CD8-positive, alpha-beta T cell (primary cell): ENCODE measurements at regions of chr4 and their contacts with region 1.

Region 1: GRCh38 chr4:73080789-73081188 is 11.3 kb upstream of the COX18 start:
- DNase-seq: no peak
- ATAC-seq: no peak
- H3K4me3 ChIP-seq: no peak overlapping the region
- H3K4me3 Mint-ChIP-seq: no peak overlapping the region
- H3K27ac ChIP-seq: no peak overlapping the region
- H3K27ac Mint-ChIP-seq: peak overlapping the region; percentile 41
- H3K4me1 ChIP-seq: no peaks in the 10 kb centered on the region
- H3K4me1 Mint-ChIP-seq: peaks cover 3% of the 10 kb centered on the region
- H3K27me3 ChIP-seq: no peaks in the 10 kb centered on the region
- H3K27me3 Mint-ChIP-seq: no peaks in the 10 kb centered on the region
- CTCF ChIP-seq: no peak

Region 2: DNA sequence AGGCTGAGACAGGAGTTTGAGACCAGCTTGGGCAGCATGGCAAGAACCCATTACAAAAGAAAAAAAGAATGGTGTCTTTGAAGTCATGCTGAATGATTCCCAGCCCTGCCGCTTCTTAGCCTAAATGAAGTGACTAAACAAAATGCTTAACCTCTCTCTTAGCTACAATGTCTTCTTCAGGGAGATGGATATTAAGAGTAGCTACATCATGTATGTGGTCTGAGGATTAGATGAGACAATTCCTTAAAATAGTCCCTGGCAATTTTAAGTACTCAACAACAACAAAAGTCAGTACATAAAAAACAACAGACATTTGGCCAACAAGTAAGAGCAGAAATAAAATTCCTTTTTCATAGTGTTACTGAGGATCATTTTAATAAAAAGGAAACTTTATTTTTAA is 53.0 kb after region 1 on chr4:
- CTCF ChIA-PET with region 1: no interaction called
- POLR2A ChIA-PET with region 1: no interaction called
- intact Hi-C with region 1: loop called in 1 of 2 experiments (anchors 5 kb)
- DNase-seq: no peak
- ATAC-seq: no peak
- H3K4me3 ChIP-seq: no peak overlapping the region
- H3K4me3 Mint-ChIP-seq: no peak overlapping the region
- H3K27ac ChIP-seq: no peak overlapping the region
- H3K27ac Mint-ChIP-seq: peak overlapping the region; percentile 5
- H3K4me1 ChIP-seq: no peaks in the 10 kb centered on the region
- H3K4me1 Mint-ChIP-seq: peaks cover 8% of the 10 kb centered on the region
- H3K27me3 ChIP-seq: no peaks in the 10 kb centered on the region
- H3K27me3 Mint-ChIP-seq: no peaks in the 10 kb centered on the region
- CTCF ChIP-seq: no peak

Region 3: DNA sequence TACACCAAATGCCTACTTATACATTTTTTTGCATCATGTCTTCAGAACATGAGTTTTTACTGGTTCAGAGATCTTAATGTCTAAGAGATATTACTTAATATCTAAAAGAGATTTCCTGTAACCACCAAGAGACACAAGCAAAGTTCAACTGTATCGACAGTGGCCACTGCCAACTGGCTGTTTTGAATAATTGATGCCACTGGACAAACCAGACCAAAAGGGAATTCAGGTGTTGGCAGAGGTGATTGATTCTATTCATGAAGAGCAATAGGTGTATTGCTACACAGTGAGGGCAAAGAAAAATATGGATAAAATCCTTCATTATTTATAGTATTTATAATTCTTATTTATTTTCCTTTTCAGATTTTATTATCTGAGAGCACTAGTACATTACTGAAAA is 236.3 kb after region 1 on chr4:
- CTCF ChIA-PET with region 1: no interaction called
- POLR2A ChIA-PET with region 1: no interaction called
- intact Hi-C with region 1: no loop called
- DNase-seq: no peak
- ATAC-seq: no peak
- H3K4me3 ChIP-seq: no peak overlapping the region
- H3K4me3 Mint-ChIP-seq: no peak overlapping the region
- H3K27ac ChIP-seq: no peak overlapping the region
- H3K27ac Mint-ChIP-seq: no peak overlapping the region
- H3K4me1 ChIP-seq: no peaks in the 10 kb centered on the region
- H3K4me1 Mint-ChIP-seq: no peaks in the 10 kb centered on the region
- H3K27me3 ChIP-seq: no peaks in the 10 kb centered on the region
- H3K27me3 Mint-ChIP-seq: no peaks in the 10 kb centered on the region
- CTCF ChIP-seq: no peak

Region 4: GRCh38 chr4:73593631-73594241 is 512.9 kb after region 1 on chr4:
- CTCF ChIA-PET with region 1: no interaction called
- POLR2A ChIA-PET with region 1: no interaction called
- intact Hi-C with region 1: no loop called
- DNase-seq: peak in 2 of 9 experiments; percentile 2 to 20
- ATAC-seq: no peak
- H3K4me3 ChIP-seq: no peak overlapping the region
- H3K4me3 Mint-ChIP-seq: no peak overlapping the region
- H3K27ac ChIP-seq: no peak overlapping the region
- H3K27ac Mint-ChIP-seq: no peak overlapping the region
- H3K4me1 ChIP-seq: no peaks in the 10 kb centered on the region
- H3K4me1 Mint-ChIP-seq: no peaks in the 10 kb centered on the region
- H3K27me3 ChIP-seq: no peaks in the 10 kb centered on the region
- H3K27me3 Mint-ChIP-seq: no peaks in the 10 kb centered on the region
- CTCF ChIP-seq: no peak